IMR-90 (cell line): ENCODE measurements at regions of chr16 and their contacts with region 1.

Region 1: DNA sequence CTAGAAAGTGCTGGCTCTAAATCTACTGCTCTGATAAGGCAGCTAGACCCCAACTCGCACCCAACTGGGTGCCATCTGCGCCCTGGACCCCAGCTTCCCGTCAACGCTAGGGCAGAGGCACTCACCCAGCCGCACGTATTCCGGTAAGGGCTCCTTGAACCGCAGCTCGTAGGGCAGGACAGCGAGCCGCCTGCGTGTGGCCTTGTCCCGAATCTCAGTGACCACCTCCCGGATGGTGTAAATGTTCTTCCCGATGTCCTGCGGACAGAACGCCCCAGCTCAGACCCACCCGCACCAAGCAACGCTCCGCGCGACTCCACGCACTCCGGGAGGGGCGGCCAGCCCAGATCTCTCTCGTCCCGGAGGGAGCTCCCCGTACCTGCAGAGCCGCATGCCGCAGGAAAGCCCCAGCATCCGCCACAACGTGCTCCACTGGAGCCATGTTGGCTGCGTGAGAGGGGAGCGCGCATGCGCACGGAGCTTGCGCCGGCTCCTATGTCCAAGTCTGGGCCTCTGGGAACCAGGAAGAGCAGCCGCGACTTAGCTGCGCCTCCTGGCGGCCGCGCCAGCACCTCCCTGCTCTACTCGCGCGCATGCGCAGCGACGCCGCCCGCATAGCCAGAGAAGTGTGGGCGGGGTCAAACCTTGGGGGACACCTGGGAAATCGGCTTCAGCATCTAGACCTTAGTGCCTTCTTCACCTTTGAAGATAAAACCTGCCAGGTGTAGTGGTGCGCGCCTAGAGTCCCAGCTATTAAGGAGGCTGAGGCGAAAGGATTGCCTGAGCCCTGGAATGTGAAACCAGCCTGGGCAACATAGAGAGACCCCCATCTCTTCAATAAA is at the start of gene NOB1:
- DNase-seq: peak; percentile 96
- ATAC-seq: peak; percentile 97
- H3K4me3 ChIP-seq: peak within 1 kb of the TSS; percentile 78
- H3K27ac ChIP-seq: peak within 1 kb of the TSS; percentile 73
- H3K4me1 ChIP-seq: no peaks in the 10 kb centered on the region
- H3K27me3 ChIP-seq: no peaks in the 10 kb centered on the region
- CTCF ChIP-seq: peak; percentile 99
- POLR2A ChIP-seq: peak; percentile 86
- RAD21 ChIP-seq: peak; percentile 88
- total RNA-seq, gene NOB1: 36.4 and 47.0 TPM in 2 replicates

Region 2: GRCh38 chr16:69339289-69340108 is 415.2 kb before region 1 on chr16 and contains the starts of genes COG8 and NIP7:
- CTCF ChIA-PET with region 1: no interaction called
- POLR2A ChIA-PET with region 1: no interaction called
- dilution Hi-C with region 1: no loop called
- in situ Hi-C with region 1: no loop called
- intact Hi-C with region 1: loop called (anchors 1 kb)
- DNase-seq: peak; percentile 98
- ATAC-seq: peak; percentile 97
- H3K4me3 ChIP-seq: peak within 1 kb of the TSS; percentile 69
- H3K27ac ChIP-seq: peak within 1 kb of the TSS; percentile 68
- H3K4me1 ChIP-seq: peaks cover 4% of the 10 kb centered on the region
- H3K27me3 ChIP-seq: no peaks in the 10 kb centered on the region
- CTCF ChIP-seq: peak; percentile 87
- POLR2A ChIP-seq: peak; percentile 80
- RAD21 ChIP-seq: no peak
- total RNA-seq, gene COG8: 19.4 and 26.2 TPM in 2 replicates
- total RNA-seq, gene NIP7: 28.3 and 40.5 TPM in 2 replicates

Region 3: DNA sequence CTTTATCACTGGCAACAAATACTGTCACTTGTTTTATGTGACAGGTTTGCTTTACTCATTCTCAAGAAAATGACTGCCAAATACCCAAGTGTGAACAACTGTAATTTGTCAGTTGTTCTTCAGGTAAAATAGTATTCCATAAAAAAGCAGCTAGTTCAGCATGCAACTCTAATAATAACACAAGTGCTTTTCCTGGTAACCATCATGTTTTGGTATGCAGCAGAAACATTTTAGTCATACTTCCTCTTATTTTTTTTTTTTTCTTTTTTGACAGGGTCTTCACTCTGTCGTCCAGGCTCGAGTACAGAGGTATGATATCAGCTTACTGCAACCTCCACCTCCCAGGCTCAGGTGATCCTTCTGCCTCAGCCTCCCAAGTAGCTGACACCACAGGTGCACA is 373.5 kb before region 1 on chr16:
- CTCF ChIA-PET with region 1: no interaction called
- POLR2A ChIA-PET with region 1: no interaction called
- dilution Hi-C with region 1: no loop called
- in situ Hi-C with region 1: no loop called
- intact Hi-C with region 1: loop called (anchors 5 kb)
- DNase-seq: peak; percentile 10
- ATAC-seq: no peak
- H3K4me3 ChIP-seq: no peak overlapping the region
- H3K27ac ChIP-seq: no peak overlapping the region
- H3K4me1 ChIP-seq: no peaks in the 10 kb centered on the region; the same call in 1 of the 2 replicates
- H3K27me3 ChIP-seq: no peaks in the 10 kb centered on the region
- CTCF ChIP-seq: no peak
- POLR2A ChIP-seq: no peak
- RAD21 ChIP-seq: no peak

Region 4: GRCh38 chr16:69672998-69673713 is 81.5 kb before region 1 on chr16:
- CTCF ChIA-PET with region 1: no interaction called
- POLR2A ChIA-PET with region 1: no interaction called
- dilution Hi-C with region 1: no loop called
- in situ Hi-C with region 1: no loop called
- intact Hi-C with region 1: no loop called
- DNase-seq: peak; percentile 44
- ATAC-seq: peak; percentile 88
- H3K4me3 ChIP-seq: no peak overlapping the region
- H3K27ac ChIP-seq: peak overlapping the region; percentile 70; the same call in 1 of the 2 replicates
- H3K4me1 ChIP-seq: peaks cover 7% of the 10 kb centered on the region
- H3K27me3 ChIP-seq: no peaks in the 10 kb centered on the region
- CTCF ChIP-seq: no peak
- POLR2A ChIP-seq: no peak
- RAD21 ChIP-seq: no peak

Region 5: DNA sequence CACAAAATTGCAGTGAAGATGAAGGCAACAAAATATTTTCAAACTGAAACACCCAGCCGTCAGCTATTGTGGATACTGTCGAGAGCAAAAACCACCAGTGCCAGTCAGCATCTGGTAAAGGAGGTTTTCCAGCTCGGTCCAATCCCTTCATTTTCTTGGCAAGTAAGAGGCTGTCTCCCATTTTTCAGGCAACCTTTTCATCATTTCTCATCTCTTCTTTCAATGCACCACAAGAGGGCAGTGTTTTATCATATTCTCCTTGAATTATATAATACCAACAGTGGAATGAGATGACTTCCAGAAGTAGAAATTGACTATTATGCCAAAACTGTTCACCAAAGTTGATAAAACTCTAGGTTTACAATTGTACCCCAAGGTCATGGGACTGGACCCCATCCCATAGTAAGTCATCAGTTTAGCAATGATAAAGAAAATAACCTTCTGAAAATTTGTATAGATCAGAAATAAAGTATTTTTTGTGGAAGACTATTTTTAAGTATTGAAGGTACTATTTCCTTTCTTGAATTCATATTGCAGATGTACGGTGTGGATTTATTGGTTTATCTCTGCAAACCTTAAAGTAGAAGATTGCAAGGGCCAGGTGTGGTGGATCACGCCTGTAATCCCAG is 45.1 kb before region 1 on chr16:
- CTCF ChIA-PET with region 1: interaction called, 4 read pairs
- POLR2A ChIA-PET with region 1: no interaction called
- dilution Hi-C with region 1: no loop called
- in situ Hi-C with region 1: loop called (anchors 5 kb)
- intact Hi-C with region 1: loop called (anchors 1 kb)
- DNase-seq: peak; percentile 73
- ATAC-seq: peak; percentile 22; the same call in 1 of the 2 replicates
- H3K4me3 ChIP-seq: no peak overlapping the region
- H3K27ac ChIP-seq: no peak overlapping the region
- H3K4me1 ChIP-seq: peaks cover 4% of the 10 kb centered on the region; the same call in 1 of the 2 replicates
- H3K27me3 ChIP-seq: no peaks in the 10 kb centered on the region
- CTCF ChIP-seq: peak; percentile 69
- POLR2A ChIP-seq: no peak
- RAD21 ChIP-seq: peak; percentile 64

Region 6: GRCh38 chr16:69726296-69727060 is 28.2 kb before region 1 on chr16 and contains the start of gene NQO1:
- CTCF ChIA-PET with region 1: interaction called, 4 read pairs
- POLR2A ChIA-PET with region 1: no interaction called
- dilution Hi-C with region 1: no loop called
- in situ Hi-C with region 1: no loop called
- intact Hi-C with region 1: loop called (anchors 2 kb)
- DNase-seq: peak; percentile 97
- ATAC-seq: peak; percentile 91
- H3K4me3 ChIP-seq: peak within 1 kb of the TSS; percentile 58
- H3K27ac ChIP-seq: peak within 1 kb of the TSS; percentile 95
- H3K4me1 ChIP-seq: peaks cover 8% of the 10 kb centered on the region; the same call in 1 of the 2 replicates
- H3K27me3 ChIP-seq: no peaks in the 10 kb centered on the region
- CTCF ChIP-seq: no peak
- POLR2A ChIP-seq: peak; percentile 92
- RAD21 ChIP-seq: no peak
- total RNA-seq, gene NQO1: 404 and 426 TPM in 2 replicates

Region 7: DNA sequence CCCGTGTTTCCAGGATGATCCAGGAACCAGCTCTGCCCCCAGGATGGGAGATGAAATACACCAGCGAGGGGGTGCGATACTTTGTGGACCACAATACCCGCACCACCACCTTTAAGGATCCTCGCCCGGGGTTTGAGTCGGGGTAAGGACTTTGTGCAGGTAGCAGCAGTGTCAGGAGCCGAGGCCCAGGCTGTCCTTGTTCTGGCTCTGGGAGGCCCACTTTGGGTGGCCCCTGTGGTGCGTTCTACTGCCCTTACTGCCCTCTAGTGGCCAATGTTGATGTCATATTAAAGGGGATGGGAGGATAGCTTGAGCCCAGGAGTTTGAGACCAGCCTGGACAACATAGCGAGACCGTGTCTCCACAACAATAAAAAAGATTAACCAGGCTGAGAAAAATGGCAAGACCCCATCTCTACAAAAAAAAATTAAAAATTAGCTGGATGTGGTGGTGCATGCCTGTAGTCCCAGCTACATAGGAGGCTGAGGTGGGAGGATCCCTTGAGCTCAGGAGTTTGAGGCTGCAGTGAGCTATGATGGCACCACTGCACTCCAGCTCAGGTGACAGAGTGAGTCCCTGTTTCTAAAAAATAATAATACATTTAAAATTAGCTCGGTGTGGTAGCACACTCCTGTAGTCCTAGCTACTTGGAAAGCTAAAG is 175.6 kb after region 1 on chr16:
- CTCF ChIA-PET with region 1: no interaction called
- POLR2A ChIA-PET with region 1: no interaction called
- dilution Hi-C with region 1: no loop called
- in situ Hi-C with region 1: no loop called
- intact Hi-C with region 1: no loop called
- DNase-seq: peak; percentile 60
- ATAC-seq: peak; percentile 93
- H3K4me3 ChIP-seq: no peak overlapping the region
- H3K27ac ChIP-seq: no peak overlapping the region
- H3K4me1 ChIP-seq: peaks cover 6% of the 10 kb centered on the region
- H3K27me3 ChIP-seq: no peaks in the 10 kb centered on the region
- CTCF ChIP-seq: peak; percentile 74
- POLR2A ChIP-seq: no peak
- RAD21 ChIP-seq: peak; percentile 89